ENCODE measurements at regions of chr14 and their contacts with region 1.

Region 1: GRCh38 chr14:60164712-60165546 is at the start of gene DHRS7:
- DNase-seq: peak; percentile 87 to 95 (median 89)
- ATAC-seq: peak; percentile 93 to 99 (median 98)
- H3K4me3 ChIP-seq: peak within 1 kb of the TSS; percentile 61 to 93 (median 77)
- H3K27ac ChIP-seq: peak within 1 kb of the TSS; percentile 58 to 96 (median 90)
- H3K4me1 ChIP-seq: peaks cover 0 to 49% (median 11%) of the 10 kb centered on the region in 12 donors
- H3K27me3 ChIP-seq: no peaks in the 10 kb centered on the region
- CTCF ChIP-seq: peak; percentile 36 to 81 (median 60)
- POLR2A ChIP-seq: peak in 1 of 2 donors; percentile 55
- total RNA-seq, gene DHRS7: 27.9 to 76.6 (median 40.2) TPM

Region 2: GRCh38 chr14:59483900-59484638 is 680.9 kb before region 1 on chr14 and contains the starts of genes JKAMP and L3HYPDH:
- intact Hi-C with region 1: loop called in 1 of 10 experiments (anchors 10 kb)
- DNase-seq: peak; percentile 98 to 99 (median 98)
- ATAC-seq: peak; percentile 97 to 98 (median 98)
- H3K4me3 ChIP-seq: peak within 1 kb of the TSS; percentile 54 to 94 (median 84)
- H3K27ac ChIP-seq: peak within 1 kb of the TSS; percentile 69 to 97 (median 96)
- H3K4me1 ChIP-seq: peaks cover 3 to 75% (median 51%) of the 10 kb centered on the region in 12 donors
- H3K27me3 ChIP-seq: no peaks in the 10 kb centered on the region
- CTCF ChIP-seq: peak; percentile 55 to 78 (median 66)
- POLR2A ChIP-seq: peak in 1 of 2 donors; percentile 80
- total RNA-seq, gene JKAMP: 24.2 to 38.6 (median 31.2) TPM
- total RNA-seq, gene L3HYPDH: 8.7 to 17.9 (median 14.1) TPM

Region 3: DNA sequence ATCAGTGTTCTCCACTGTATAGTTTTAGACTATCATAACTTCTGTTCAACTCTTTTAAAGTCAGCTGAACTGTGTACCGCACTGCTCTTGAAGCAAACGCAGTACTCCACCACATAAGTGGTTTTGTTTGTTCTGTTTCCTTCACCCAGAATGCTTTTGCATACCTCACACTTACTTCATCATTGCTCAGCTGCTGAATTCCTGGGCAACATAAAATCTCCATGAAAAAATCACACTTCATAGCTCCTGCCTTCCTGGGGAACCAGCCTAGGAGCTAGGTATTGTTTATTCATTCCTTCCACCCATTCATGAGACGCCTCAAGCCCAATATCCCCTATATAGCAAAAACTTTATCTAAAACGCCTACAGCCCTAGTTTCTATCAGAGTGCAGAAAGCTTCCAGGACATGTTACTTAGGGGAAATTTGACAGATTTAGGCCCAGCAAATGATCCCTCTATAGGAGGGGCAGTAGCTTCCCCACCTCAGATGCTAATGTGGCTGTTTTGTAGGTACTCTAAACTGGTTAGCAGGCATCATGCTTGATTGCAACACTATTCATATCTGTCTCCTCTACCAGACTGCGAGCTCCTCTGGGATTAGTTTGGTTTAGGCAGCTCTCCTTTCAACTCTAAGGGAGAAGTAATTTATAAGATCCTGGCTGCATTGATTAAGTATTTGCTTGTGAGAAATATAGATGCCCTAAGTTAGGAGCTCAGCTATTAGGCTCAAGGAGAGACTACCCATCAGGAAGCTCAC is 200.5 kb before region 1 on chr14:
- intact Hi-C with region 1: loop called in 4 of 10 experiments (anchors 5 kb)
- DNase-seq: no peak
- ATAC-seq: peak in 2 of 4 donors; percentile 14 to 22
- H3K4me3 ChIP-seq: peak overlapping the region in 3 of 12 donors; percentile 19 to 64 (median 45)
- H3K27ac ChIP-seq: no peak overlapping the region
- H3K4me1 ChIP-seq: peaks cover 0 to 4% (median 0%) of the 10 kb centered on the region in 12 donors
- H3K27me3 ChIP-seq: no peaks in the 10 kb centered on the region
- CTCF ChIP-seq: no peak
- POLR2A ChIP-seq: no peak

Region 4: GRCh38 chr14:60064491-60065072 is 100.3 kb before region 1 on chr14:
- intact Hi-C with region 1: loop called in 6 of 10 experiments (anchors 5 kb)
- DNase-seq: no peak
- ATAC-seq: no peak
- H3K4me3 ChIP-seq: no peak overlapping the region
- H3K27ac ChIP-seq: no peak overlapping the region
- H3K4me1 ChIP-seq: no peaks in the 10 kb centered on the region
- H3K27me3 ChIP-seq: no peaks in the 10 kb centered on the region
- CTCF ChIP-seq: peak; percentile 38 to 78 (median 66)
- POLR2A ChIP-seq: no peak

Region 5: DNA sequence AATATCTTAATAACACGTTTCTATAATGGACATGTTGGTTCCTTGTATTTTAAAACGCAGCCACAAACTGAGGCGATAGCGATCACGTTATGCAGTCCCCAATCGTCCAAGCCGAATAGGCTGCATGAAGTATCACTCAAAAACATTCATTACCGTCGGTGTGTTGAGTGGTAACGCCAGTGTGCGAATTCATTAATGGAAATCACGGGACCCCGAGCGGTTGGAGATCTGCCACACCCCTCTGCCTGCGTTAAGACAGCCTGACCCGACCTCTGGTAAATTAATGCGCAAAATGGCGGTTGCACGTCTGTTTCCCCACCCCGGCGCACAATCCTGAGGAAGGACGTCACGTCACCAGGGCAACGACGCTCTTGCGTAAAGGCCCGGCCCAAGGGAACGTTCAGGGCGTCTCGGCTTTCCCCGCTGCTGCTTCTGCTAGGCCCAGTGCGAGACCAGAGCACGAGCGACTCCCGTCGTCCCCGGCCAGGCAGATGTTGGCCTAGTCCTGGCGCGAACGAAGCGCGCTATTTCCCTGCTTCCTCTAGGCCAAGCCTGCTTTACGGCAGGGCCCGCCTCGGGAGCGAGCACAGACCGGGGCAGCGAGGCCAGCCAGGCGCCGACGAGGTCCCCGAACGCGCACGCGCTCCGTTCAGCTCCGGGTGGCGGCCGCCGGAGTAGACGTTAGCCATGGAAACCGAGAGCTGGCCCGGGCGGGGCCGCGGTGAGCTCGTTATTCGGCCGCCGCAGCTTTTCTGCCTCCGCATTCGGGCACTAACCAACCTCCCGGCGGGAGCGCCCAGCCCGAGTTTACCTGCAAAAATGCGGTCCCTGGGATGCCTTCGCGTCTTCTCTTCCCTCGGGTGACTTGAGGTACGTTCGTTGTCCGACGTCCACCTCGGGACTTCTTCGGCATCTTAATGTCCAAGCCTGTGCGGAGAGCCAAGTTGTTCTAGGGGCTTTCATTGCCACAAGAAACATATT is 73.1 kb before region 1 on chr14 and contains the start of gene PCNX4:
- intact Hi-C with region 1: loop called in 7 of 10 experiments (anchors 1 to 10 kb)
- DNase-seq: peak; percentile 97 to 98 (median 98)
- ATAC-seq: peak; percentile 95 to 99 (median 98)
- H3K4me3 ChIP-seq: peak within 1 kb of the TSS; percentile 50 to 90 (median 74)
- H3K27ac ChIP-seq: peak within 1 kb of the TSS; percentile 91 to 99 (median 98)
- H3K4me1 ChIP-seq: peaks cover 0 to 54% (median 31%) of the 10 kb centered on the region in 12 donors
- H3K27me3 ChIP-seq: no peaks in the 10 kb centered on the region
- CTCF ChIP-seq: peak in 2 of 12 donors; percentile 7 to 14
- POLR2A ChIP-seq: peak; percentile 32 to 95
- total RNA-seq, gene PCNX4: 22.1 to 56.2 (median 37.3) TPM

Region 6: GRCh38 chr14:60248697-60249318 is 83.9 kb after region 1 on chr14 and contains the start of gene PPM1A:
- intact Hi-C with region 1: loop called in 1 of 10 experiments (anchors 2 kb)
- DNase-seq: peak; percentile 96 to 98 (median 97)
- ATAC-seq: peak; percentile 91 to 95 (median 94)
- H3K4me3 ChIP-seq: peak within 1 kb of the TSS; percentile 65 to 94 (median 84)
- H3K27ac ChIP-seq: peak within 1 kb of the TSS; percentile 93 to 100 (median 100)
- H3K4me1 ChIP-seq: peaks cover 2 to 54% (median 36%) of the 10 kb centered on the region in 12 donors
- H3K27me3 ChIP-seq: no peaks in the 10 kb centered on the region
- CTCF ChIP-seq: no peak
- POLR2A ChIP-seq: peak; percentile 39 to 82
- total RNA-seq, gene PPM1A: 60.7 to 126 (median 95.1) TPM